Prostate gland (tissue), 2 donors: ENCODE measurements at regions of chr2 and their contacts with region 1.

Region 1: GRCh38 chr2:28751252-28751955 is at the start of gene PPP1CB:
- DNase-seq: peak; percentile 97
- H3K4me3 ChIP-seq: peak within 1 kb of the TSS; percentile 99 to 100
- H3K27ac ChIP-seq: peak within 1 kb of the TSS; percentile 100
- H3K4me1 ChIP-seq: peaks cover 27% of the 10 kb centered on the region
- H3K27me3 ChIP-seq: no peaks in the 10 kb centered on the region
- CTCF ChIP-seq: peak; percentile 23 to 75 (median 40)
- POLR2A ChIP-seq: peak; percentile 85
- total RNA-seq, gene PPP1CB: 177 to 260 TPM

Region 2: GRCh38 chr2:28566521-28567041 is 184.8 kb before region 1 on chr2:
- intact Hi-C with region 1: loop called (anchors 2 kb)
- DNase-seq: peak; percentile 78
- H3K4me3 ChIP-seq: peak overlapping the region; percentile 48 to 51
- H3K27ac ChIP-seq: peak overlapping the region; percentile 76 to 82
- H3K4me1 ChIP-seq: no peaks in the 10 kb centered on the region
- H3K27me3 ChIP-seq: no peaks in the 10 kb centered on the region
- CTCF ChIP-seq: peak; percentile 99 to 100 (median 100)
- POLR2A ChIP-seq: no peak

Region 3: DNA sequence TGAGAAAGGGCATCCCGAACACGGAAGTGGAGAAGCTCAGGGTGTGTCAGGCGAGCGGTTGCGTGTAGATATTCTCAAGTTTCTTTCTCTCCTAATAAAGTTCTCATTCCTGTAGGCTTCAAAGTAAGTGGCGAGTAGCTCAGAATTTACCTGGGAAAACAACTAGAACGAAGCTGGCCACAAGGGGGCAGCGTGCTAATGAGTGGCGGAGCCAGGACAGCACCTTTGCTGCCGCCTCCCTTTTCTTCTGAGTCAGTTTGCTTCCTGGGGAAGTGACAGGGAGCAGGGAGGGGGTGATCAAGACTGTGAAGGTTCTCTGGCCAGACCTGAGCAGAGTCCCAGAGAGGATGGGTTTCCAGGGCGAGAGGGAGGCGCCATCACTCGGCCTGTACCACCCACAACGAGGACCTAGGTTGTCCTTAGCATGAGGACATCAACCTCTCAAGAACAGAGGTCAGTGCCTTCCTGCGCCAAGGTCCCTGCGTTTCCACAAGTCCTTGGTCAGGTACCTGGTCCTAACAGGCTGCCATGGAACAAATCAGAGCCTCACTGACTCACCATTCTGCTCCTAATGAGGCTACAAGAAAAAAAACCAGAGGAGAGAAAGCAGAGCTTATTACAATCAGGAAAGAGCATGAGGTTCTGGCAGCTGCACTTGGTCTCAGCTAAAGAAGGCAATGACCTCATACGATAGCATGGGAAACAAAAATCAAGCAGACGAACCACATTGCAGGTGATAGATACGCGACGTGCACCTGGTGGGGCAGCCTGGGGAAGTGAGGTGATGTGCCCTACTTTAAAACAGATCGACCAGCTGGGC is 156.9 kb before region 1 on chr2:
- intact Hi-C with region 1: loop called (anchors 2 kb)
- DNase-seq: peak; percentile 95
- H3K4me3 ChIP-seq: no peak overlapping the region
- H3K27ac ChIP-seq: peak overlapping the region; percentile 80 to 89
- H3K4me1 ChIP-seq: peaks cover 2% of the 10 kb centered on the region
- H3K27me3 ChIP-seq: no peaks in the 10 kb centered on the region
- CTCF ChIP-seq: peak; percentile 92 to 96 (median 94)
- POLR2A ChIP-seq: no peak

Region 4: DNA sequence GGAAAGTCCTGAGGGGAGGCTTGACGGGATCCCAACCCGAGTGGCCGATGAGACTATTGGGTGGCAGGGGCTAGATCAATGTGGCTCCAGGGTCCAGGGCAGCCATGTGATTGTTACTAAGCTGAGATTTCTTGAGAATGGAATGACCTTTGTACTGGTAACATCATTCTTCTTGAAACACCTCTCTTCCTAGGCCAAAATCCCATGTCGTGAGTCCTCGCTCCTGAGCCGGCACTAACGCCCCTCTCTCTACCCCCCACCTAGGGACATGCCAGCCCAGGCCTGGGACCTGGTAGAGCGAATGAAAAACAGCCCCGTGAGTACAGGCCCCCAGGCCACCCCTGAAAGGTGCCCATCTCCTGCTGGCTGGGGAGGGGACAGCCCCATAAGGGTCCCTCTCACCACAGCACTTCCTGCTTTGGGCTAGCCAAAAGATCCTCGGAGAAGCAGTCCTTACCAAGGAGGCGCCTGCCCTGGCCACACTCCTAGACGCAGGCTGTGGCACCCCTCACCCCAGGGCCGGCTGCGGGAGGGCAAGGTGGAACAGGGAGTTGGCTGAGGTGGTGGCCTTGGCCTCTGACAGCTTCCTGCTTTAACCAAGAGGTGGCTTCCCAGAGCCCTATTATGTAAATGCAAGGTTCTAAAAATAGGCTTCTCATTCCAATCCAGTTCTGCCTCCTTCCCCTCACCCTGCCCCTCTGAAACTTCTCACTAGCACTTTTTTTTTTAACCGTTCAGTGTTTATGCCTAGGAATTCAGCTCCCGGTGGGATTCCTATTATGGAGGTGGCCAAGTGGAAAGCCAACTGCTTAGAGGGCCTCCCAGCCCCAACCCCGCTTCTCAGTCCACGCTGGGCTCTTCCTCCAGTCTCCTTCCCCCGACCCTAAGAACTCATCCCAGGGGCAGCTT is 126.4 kb before region 1 on chr2:
- intact Hi-C with region 1: loop called (anchors 5 kb)
- DNase-seq: no peak
- H3K4me3 ChIP-seq: no peak overlapping the region
- H3K27ac ChIP-seq: peak overlapping the region; percentile 84 to 90
- H3K4me1 ChIP-seq: peaks cover 6% of the 10 kb centered on the region
- H3K27me3 ChIP-seq: no peaks in the 10 kb centered on the region
- CTCF ChIP-seq: no peak
- POLR2A ChIP-seq: peak; percentile 19

Region 5: DNA sequence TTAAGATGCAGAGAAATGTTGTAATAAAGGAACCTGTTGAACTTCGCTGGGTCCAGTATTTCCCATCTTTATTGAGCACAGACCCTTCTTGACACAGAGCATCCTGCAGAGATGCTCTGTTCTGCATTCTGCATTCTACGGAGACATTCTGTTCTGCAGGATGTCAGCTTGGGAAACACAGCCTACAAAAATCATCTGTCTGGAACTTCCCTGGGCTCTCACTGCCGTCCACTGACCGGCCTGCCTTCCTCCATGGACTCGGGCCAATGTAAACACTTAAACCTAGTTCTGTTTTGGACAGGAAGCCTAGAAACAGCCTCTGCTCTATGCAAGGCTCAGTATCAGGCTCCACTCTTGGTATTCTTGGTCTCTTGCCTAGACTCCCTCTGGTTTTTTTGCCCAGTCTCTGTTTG is 89.8 kb before region 1 on chr2:
- intact Hi-C with region 1: loop called (anchors 10 kb)
- DNase-seq: peak; percentile 73
- H3K4me3 ChIP-seq: no peak overlapping the region
- H3K27ac ChIP-seq: peak overlapping the region; percentile 66 to 68
- H3K4me1 ChIP-seq: peaks cover 2% of the 10 kb centered on the region
- H3K27me3 ChIP-seq: no peaks in the 10 kb centered on the region
- CTCF ChIP-seq: no peak
- POLR2A ChIP-seq: no peak

Region 6: DNA sequence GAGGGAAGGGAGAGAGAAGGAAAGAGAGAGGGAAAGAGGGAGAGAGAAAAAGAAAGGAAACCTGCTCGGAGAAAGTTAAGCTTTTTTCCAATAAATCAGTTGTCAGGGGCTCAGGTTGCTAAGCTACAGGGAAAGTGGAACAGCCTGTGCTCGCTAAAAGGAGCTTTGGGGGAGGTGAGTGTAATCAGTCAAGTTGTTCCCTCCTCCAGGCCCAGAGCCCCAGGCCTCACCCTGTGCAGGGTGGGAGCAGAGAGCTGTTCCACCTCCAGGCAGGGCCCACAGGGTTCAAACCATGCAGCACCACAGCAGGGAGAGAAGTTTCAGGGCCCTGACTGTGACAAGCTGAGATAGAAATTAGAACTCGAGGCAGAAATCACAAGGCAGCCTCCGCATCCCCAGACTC is 56.2 kb before region 1 on chr2:
- intact Hi-C with region 1: loop called (anchors 10 kb)
- DNase-seq: peak; percentile 21
- H3K4me3 ChIP-seq: no peak overlapping the region
- H3K27ac ChIP-seq: peak overlapping the region; percentile 48 to 54
- H3K4me1 ChIP-seq: peaks cover 3% of the 10 kb centered on the region
- H3K27me3 ChIP-seq: no peaks in the 10 kb centered on the region
- CTCF ChIP-seq: no peak
- POLR2A ChIP-seq: no peak